Activated B cell treated with CpG ODN at 0.5 μM for 24 hours (primary cell): ENCODE measurements at regions of chr12 and their contacts with region 1.

Region 1: GRCh38 chr12:111434680-111435338 is 29.1 kb downstream of the SH2B3 start:
- DNase-seq: peak; percentile 75
- ATAC-seq: peak; percentile 80
- H3K4me3 Mint-ChIP-seq: peak overlapping the region; percentile 83
- H3K27ac Mint-ChIP-seq: peak overlapping the region; percentile 92
- H3K4me1 Mint-ChIP-seq: peaks cover 95% of the 10 kb centered on the region
- H3K27me3 Mint-ChIP-seq: no peaks in the 10 kb centered on the region
- CTCF ChIP-seq: no peak

Region 2: DNA sequence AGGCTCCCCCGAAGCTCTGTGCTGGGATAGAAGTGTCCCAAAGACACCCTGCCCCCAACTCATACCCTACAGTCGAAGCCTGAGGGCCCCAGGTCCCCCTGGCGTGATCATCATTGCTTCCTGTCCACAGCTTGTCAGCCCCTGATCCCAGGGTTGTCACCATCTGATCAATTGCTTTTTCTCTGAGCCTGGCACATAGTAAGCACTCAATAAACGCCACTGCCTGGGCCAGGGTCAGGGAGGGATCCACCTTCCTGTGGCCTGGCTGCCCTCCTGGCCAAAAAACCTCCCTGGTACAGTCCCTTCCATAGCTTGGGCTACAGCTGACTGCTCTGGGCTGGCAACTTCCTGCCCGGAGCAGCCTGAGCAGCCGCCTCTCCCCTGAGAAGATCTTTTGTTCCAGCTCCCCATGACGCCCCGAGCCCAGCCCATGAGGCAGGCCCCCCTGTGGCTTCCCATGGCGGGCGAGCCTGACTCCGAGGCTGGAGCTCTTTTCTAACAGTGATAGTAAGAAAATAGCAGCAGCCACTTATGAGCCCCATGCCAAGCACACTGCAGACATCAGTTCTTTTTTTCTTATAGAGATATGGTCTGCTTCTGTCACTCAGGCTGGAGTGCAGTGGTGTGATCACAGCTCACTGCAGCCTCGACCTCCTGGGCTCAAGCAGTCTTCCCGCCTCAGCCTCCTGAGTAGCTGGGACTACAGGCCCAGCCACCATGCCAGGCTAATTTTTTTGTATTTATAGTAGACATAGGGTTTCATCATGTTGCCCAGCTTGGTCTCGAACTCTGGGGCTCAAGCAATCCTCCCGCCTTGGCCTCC is 22.6 kb before region 1 on chr12:
- CTCF ChIA-PET with region 1: interaction called, 7 read pairs
- POLR2A ChIA-PET with region 1: interaction called, 136 read pairs
- intact Hi-C with region 1: no loop called
- DNase-seq: no peak
- ATAC-seq: peak; percentile 23
- H3K4me3 Mint-ChIP-seq: peak overlapping the region; percentile 75
- H3K27ac Mint-ChIP-seq: peak overlapping the region; percentile 87
- H3K4me1 Mint-ChIP-seq: peaks cover 79% of the 10 kb centered on the region
- H3K27me3 Mint-ChIP-seq: no peaks in the 10 kb centered on the region
- CTCF ChIP-seq: no peak

Region 3: DNA sequence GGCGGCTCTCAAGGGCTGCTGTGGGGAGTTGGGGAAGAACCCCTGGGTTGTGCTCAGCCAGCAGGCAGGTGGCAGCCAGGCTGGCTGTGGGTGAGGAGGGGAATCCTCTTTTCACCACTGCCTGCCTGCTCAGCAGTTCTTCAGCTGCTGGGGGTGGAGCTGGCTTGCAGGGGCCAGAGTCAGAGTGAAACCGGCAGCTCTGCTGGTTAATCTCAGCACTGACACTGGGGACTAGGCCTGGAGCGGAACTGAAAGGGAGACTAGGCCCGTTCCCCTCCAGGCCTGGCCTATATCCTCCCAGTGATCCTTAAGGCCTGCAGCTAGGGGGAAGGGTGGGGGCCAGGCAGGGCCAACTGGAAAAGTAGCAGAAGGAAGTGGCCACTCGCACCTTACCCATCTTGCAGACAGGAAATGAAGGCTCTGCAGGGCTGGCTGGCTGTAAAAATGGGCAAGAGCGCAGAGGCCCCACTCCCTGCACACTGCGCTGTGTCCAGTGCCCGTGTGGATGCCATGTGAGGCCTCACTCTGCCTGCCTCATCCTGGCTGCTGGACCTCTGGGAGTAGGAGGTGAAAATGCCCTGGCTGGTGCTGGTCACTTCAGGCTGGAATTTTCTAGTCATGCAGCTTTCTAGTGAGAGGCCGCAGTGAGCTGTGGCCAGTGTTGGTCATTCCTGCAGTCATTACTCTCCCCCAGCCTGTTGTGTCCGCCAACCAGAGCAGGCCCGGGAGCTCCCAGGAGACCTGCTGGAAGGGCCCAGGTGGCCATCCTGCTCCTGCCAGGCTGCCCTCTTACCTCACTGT is 10.3 kb after region 1 on chr12:
- CTCF ChIA-PET with region 1: interaction called, 28 read pairs
- POLR2A ChIA-PET with region 1: interaction called, 122 read pairs
- intact Hi-C with region 1: loop called (anchors 1 kb)
- DNase-seq: peak; percentile 75
- ATAC-seq: peak; percentile 93
- H3K4me3 Mint-ChIP-seq: peak overlapping the region; percentile 48
- H3K27ac Mint-ChIP-seq: peak overlapping the region; percentile 78
- H3K4me1 Mint-ChIP-seq: peaks cover 85% of the 10 kb centered on the region
- H3K27me3 Mint-ChIP-seq: no peaks in the 10 kb centered on the region
- CTCF ChIP-seq: no peak

Region 4: DNA sequence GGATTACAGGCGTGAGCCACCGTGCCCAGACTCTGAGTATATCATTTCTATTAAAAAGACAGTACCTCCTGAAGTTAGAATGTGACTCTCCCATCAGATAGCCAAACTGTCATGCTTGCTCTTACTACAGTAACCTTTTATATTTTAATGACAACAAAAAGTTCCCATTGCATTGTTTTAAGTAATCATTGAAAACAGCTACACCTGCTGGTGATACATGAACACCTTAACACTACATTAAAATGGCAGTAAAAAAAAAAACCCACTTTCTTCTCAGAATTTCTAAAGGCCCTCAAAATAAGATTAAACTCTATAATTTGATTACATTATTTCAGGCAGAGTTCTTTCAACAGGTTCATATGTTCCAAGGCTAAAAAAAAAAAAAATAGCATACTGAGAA is 47.7 kb after region 1 on chr12:
- CTCF ChIA-PET with region 1: no interaction called
- POLR2A ChIA-PET with region 1: no interaction called
- intact Hi-C with region 1: no loop called
- DNase-seq: no peak
- ATAC-seq: no peak
- H3K4me3 Mint-ChIP-seq: no peak overlapping the region
- H3K27ac Mint-ChIP-seq: no peak overlapping the region
- H3K4me1 Mint-ChIP-seq: no peaks in the 10 kb centered on the region
- H3K27me3 Mint-ChIP-seq: no peaks in the 10 kb centered on the region
- CTCF ChIP-seq: no peak